ENCODE measurements at regions of chr4 and their contacts with region 1.

Region 1: GRCh38 chr4:20773144-20773997 is 73.1 kb downstream of the PACRGL start:
- DNase-seq: peak; percentile 21 to 60 (median 31)
- H3K4me3 ChIP-seq: no peak overlapping the region
- H3K27ac ChIP-seq: no peak overlapping the region
- H3K4me1 ChIP-seq: peaks cover 0 to 2% (median 0%) of the 10 kb centered on the region in 4 experiments
- H3K27me3 ChIP-seq: peaks cover 0 to 4% (median 0%) of the 10 kb centered on the region in 5 experiments

Region 2: DNA sequence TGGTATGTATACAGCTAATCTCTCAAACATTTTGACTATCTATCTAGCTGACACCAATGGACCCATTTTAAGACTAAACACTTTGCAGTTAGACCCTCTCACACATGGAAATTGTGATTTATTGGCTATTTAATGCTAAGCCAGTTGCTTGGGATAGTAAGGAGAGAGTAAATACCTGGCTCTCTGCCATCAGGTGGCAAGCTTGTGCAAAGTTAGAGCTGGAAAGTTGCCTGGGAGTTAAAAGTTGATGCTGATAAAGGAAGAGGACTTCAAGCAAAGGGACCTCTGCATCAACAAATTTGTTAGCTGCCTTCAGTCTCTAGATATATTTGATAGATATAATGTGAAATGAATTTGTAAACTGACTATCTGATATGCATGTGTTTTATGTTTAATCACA is 12.0 kb before region 1 on chr4:
- CTCF ChIA-PET with region 1: interaction called, 10 read pairs
- POLR2A ChIA-PET with region 1: no interaction called
- DNase-seq: no peak
- H3K4me3 ChIP-seq: no peak overlapping the region
- H3K27ac ChIP-seq: no peak overlapping the region
- H3K4me1 ChIP-seq: no peaks in the 10 kb centered on the region
- H3K27me3 ChIP-seq: no peaks in the 10 kb centered on the region

Region 3: DNA sequence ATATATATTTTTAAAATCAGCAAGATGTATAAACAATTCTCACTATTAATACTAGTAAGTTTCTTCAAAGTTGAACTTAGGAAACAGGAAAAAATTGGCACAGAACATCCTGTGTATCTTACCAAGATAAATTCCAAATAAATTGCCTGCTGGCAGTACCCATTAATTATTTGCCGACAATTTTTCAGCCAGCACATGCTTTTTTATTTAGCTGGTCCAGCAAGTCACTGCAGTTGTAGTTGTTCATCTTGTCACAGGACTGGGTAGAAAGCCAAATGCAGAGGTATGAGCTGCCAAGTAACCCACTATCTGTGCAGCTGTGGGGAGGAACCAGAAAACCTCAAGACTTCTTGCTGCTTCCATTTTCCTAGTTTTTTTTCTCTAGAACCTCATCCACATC is 40.3 kb after region 1 on chr4:
- CTCF ChIA-PET with region 1: no interaction called
- POLR2A ChIA-PET with region 1: no interaction called
- DNase-seq: no peak
- H3K4me3 ChIP-seq: no peak overlapping the region
- H3K27ac ChIP-seq: no peak overlapping the region
- H3K4me1 ChIP-seq: no peaks in the 10 kb centered on the region
- H3K27me3 ChIP-seq: no peaks in the 10 kb centered on the region

Region 4: GRCh38 chr4:21134994-21135393 is 361.6 kb after region 1 on chr4:
- CTCF ChIA-PET with region 1: interaction called, 10 read pairs
- POLR2A ChIA-PET with region 1: no interaction called
- DNase-seq: peak in 1 of 3 donors; percentile 22
- H3K4me3 ChIP-seq: no peak overlapping the region
- H3K27ac ChIP-seq: no peak overlapping the region
- H3K4me1 ChIP-seq: no peaks in the 10 kb centered on the region
- H3K27me3 ChIP-seq: no peaks in the 10 kb centered on the region